PC-9 (cell line): ENCODE measurements at regions of chr22 and their contacts with region 1.

Region 1: DNA sequence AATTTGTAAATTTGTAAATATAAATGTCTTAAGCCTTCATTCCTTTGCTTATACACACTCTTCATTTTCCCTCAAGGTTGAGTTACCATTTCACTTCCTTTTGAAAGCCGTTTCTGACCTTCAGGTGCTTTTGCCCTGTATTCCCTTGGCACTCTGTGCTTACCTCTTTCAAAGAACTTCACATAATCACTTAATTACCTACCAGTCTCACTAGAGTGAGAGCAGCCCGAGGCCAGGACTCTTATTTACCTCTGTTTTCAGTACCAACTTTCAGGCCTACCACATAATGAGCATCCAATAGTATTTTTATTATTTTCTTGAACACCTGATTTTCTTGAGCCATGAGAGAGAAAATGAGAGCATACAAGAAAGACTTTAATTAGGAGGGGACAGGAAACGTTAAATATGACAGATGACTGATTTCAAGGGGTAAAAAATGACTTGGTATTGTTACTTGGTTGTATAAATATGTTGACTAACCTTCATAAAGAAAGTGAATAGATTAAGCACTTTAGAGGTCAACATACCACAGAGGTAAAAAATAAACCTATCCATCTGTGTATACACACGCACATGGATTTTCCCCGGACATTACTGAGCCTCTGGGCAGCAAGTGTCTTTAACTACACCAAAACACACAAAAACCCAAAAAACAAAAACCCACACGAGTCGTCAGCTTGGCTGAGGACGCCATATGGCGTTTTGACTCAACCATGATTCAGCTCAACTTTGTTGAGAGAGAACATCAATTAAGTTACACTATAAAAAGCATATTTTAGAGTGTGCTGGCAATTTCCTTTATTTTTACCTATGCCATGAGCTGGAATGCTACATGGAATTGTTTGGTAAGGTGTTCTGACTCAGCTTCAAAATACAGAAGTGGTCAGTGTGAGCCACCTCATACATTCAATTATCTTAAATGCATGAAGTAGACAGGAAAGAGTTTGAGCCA is 7.6 kb downstream of the ATXN10 start:
- DNase-seq: no peak
- H3K4me3 ChIP-seq: no peak overlapping the region
- H3K27ac ChIP-seq: peak overlapping the region; percentile 97
- H3K4me1 ChIP-seq: peaks cover 98% of the 10 kb centered on the region
- H3K27me3 ChIP-seq: no peaks in the 10 kb centered on the region
- CTCF ChIP-seq: no peak

Region 2: GRCh38 chr22:45587638-45588505 is 91.4 kb before region 1 on chr22:
- CTCF ChIA-PET with region 1: no interaction called
- POLR2A ChIA-PET with region 1: no interaction called
- intact Hi-C with region 1: no loop called
- DNase-seq: peak in 1 of 2 experiments; percentile 16
- H3K4me3 ChIP-seq: no peak overlapping the region
- H3K27ac ChIP-seq: no peak overlapping the region
- H3K4me1 ChIP-seq: 0 out of 2 replicates have a peak, but pooled peaks cover 4% of the 10 kb centered on the region
- H3K27me3 ChIP-seq: no peaks in the 10 kb centered on the region
- CTCF ChIP-seq: no peak

Region 3: DNA sequence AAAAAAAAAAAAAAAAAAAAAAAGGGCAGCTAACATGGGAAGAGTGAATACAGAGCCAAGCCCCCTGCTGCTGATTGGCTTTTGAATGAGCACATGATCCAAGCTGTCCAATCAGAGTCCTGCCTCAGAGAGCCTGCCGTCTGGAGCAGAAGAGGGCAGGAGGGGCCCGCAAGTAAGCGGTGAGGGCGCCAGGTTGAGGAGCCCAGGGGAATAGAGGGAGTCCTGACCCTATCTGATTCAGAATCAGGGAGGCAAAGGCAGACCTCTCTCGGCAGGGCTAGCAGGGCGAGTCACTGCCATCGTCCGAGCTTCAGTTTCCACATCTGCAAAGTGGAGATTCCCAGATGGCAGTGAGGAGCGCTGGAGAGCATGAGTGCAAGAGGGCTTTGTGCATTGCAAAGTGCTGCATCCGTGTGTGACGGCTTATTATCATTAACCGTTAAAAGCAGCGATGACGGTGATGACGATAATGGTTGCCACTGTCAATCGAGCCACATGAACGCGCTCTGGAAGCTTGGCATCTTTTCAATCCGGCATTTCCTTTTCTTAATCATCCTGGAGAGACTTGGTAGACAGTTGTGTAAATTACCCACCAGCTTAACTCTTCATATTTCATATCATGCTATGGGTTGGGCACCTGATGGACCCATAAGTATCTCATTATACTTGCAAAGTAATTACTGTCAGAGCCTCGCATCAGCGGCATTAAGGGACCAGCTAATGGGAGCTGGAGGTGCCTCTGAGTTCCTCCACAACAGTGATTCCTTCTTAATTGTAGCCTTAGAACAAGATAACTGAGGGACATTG is 76.2 kb before region 1 on chr22:
- CTCF ChIA-PET with region 1: no interaction called
- POLR2A ChIA-PET with region 1: interaction called, 19 read pairs
- intact Hi-C with region 1: no loop called
- DNase-seq: peak in 1 of 2 experiments; percentile 46
- H3K4me3 ChIP-seq: no peak overlapping the region
- H3K27ac ChIP-seq: no peak overlapping the region
- H3K4me1 ChIP-seq: peaks cover 43% of the 10 kb centered on the region
- H3K27me3 ChIP-seq: no peaks in the 10 kb centered on the region
- CTCF ChIP-seq: no peak

Region 4: GRCh38 chr22:45718391-45718790 is 39.2 kb after region 1 on chr22:
- CTCF ChIA-PET with region 1: no interaction called
- POLR2A ChIA-PET with region 1: interaction called, 11 read pairs
- intact Hi-C with region 1: no loop called
- DNase-seq: no peak
- H3K4me3 ChIP-seq: no peak overlapping the region
- H3K27ac ChIP-seq: peak overlapping the region; percentile 62
- H3K4me1 ChIP-seq: peaks cover 24% of the 10 kb centered on the region
- H3K27me3 ChIP-seq: no peaks in the 10 kb centered on the region
- CTCF ChIP-seq: no peak

Region 5: DNA sequence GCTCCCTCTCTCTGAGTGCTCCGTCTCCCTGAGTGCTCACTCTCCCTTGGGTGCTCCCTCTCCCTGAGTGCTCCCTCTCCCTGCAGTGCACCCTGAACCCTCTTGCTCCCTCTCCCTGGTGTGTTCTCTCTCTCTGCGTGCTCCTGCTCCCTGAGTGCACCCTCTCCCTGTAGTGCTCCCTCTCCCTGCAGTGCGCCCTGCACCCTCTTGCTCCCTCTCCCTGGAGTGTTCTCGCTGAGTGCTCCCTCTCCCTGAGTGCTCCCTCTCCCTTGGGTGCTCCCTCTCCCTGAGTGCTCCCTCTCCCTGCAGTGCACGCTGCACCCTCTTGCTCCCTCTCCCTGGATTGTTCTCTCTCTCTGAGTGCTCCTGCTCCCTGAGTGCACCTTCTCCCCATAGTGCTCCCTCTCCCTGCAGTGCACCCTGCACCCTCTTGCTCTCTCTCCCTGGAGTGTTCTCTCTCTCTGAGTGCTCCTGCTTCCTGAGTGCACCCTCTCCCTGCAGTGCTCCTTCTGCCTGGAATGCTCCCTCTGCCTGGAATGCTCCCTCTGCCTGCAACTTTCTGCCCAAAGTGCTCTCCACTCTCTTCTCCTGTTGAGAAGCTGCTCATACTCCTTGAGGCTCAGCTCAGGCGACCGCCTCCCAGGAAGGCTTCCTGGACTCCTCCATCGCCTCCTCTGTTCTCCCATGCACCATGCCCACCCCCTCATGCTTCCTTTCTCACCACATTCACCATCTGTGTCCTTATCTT is 346.2 kb after region 1 on chr22:
- CTCF ChIA-PET with region 1: no interaction called
- POLR2A ChIA-PET with region 1: interaction called, 13 read pairs
- intact Hi-C with region 1: no loop called
- DNase-seq: no peak
- H3K4me3 ChIP-seq: no peak overlapping the region
- H3K27ac ChIP-seq: no peak overlapping the region
- H3K4me1 ChIP-seq: 0 out of 2 replicates have a peak, but pooled peaks cover 7% of the 10 kb centered on the region
- H3K27me3 ChIP-seq: peaks cover 22% of the 10 kb centered on the region
- CTCF ChIP-seq: no peak